ENCODE measurements at regions of chr18 and their contacts with region 1.

Region 1: DNA sequence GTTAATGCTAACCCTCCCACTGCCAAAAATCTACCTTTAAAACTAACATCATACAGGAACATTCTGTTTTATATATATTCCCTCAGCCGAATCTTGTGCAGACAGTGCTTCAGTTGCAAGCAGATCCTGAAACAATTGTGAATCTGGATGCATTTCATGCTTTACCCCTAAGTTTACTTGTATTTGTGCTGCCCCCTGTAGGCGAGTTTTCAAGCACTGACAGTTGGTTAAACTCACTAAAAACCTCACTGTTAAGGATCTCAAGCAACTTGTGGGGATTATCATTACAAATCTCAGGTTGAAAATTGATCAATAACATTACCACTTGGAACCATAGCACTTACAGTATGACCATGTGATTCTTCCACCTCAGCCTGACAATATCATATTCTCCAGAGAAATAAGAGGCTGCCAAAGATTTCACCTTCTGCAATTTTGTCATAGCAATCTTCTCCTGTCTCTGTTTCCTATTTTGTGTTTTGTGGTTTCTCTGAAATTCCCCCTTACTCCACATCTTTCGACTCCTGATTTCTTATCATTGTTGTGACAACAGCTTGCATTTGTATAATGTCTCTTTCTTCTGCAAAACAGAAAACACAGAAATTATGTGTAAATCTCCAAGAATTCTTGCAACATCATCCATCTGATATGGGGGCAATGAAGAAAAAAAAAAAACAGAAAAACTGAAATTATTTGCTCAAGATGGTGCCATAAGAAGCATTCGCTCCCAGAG is 354.6 kb upstream of the SETBP1 start:
- DNase-seq: peak; percentile 40
- H3K4me3 ChIP-seq: no peak overlapping the region
- H3K27ac ChIP-seq: no peak overlapping the region
- H3K4me1 ChIP-seq: no peaks in the 10 kb centered on the region
- H3K27me3 ChIP-seq: no peaks in the 10 kb centered on the region
- CTCF ChIP-seq: peak; percentile 75 to 76

Region 2: GRCh38 chr18:43661570-43661969 is 664.5 kb before region 1 on chr18:
- CTCF ChIA-PET with region 1: no interaction called
- dilution Hi-C with region 1: no loop called
- in situ Hi-C with region 1: no loop called
- intact Hi-C with region 1: loop called (anchors 1 kb)
- DNase-seq: peak; percentile 79
- H3K4me3 ChIP-seq: no peak overlapping the region
- H3K27ac ChIP-seq: no peak overlapping the region
- H3K4me1 ChIP-seq: peaks cover 9% of the 10 kb centered on the region
- H3K27me3 ChIP-seq: no peaks in the 10 kb centered on the region
- CTCF ChIP-seq: peak; percentile 64 to 76

Region 3: DNA sequence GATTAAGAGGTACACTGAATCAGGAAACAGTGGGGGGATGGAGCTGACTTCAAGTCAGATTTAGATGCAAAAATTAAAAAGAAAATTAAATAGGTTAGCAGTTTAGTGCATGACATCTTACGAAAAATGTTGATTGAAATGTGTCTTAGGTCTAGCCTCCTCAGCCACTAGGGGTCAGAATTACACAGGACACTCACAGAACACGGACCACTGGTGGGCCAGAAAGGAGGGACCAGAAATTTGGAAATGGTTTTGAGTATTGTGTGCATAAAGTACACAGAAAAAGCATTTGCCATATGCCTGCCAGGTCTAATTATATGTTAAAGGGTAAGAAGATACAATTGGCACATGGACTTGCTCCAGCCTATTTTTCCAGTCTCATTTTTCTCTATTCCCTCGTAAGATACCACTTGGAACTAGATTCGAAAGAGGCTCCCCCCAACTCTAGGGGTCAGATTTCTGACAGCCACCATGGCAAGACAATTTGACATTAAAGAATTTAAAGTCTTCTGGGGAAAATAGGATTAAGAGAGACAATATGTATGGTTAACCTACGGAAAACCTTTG is 195.6 kb before region 1 on chr18:
- CTCF ChIA-PET with region 1: no interaction called
- dilution Hi-C with region 1: no loop called
- in situ Hi-C with region 1: no loop called
- intact Hi-C with region 1: loop called (anchors 1 kb)
- DNase-seq: peak; percentile 26
- H3K4me3 ChIP-seq: no peak overlapping the region
- H3K27ac ChIP-seq: no peak overlapping the region
- H3K4me1 ChIP-seq: no peaks in the 10 kb centered on the region
- H3K27me3 ChIP-seq: no peaks in the 10 kb centered on the region
- CTCF ChIP-seq: peak; percentile 85 to 87

Region 4: GRCh38 chr18:44149706-44150105 is 176.4 kb before region 1 on chr18:
- CTCF ChIA-PET with region 1: no interaction called
- dilution Hi-C with region 1: no loop called
- in situ Hi-C with region 1: loop called in 1 of 2 experiments (anchors 10 kb)
- intact Hi-C with region 1: no loop called
- DNase-seq: peak; percentile 94
- H3K4me3 ChIP-seq: peak overlapping the region in 1 of 3 experiments; percentile 54
- H3K27ac ChIP-seq: peak overlapping the region; percentile 87
- H3K4me1 ChIP-seq: peaks cover 21% of the 10 kb centered on the region
- H3K27me3 ChIP-seq: no peaks in the 10 kb centered on the region
- CTCF ChIP-seq: no peak

Measured in mammary epithelial cell (primary cell).